PC-3 (cell line): ENCODE measurements at regions of chr3 and their contacts with region 1.

Region 1: GRCh38 chr3:71064288-71064955 is 519.1 kb downstream of the FOXP1 start:
- DNase-seq: peak; percentile 57
- ATAC-seq: peak; percentile 35
- H3K4me3 ChIP-seq: peak overlapping the region; percentile 71
- H3K27ac ChIP-seq: peak overlapping the region; percentile 76
- H3K4me1 ChIP-seq: peaks cover 62% of the 10 kb centered on the region
- H3K27me3 ChIP-seq: no peaks in the 10 kb centered on the region
- CTCF ChIP-seq: no peak

Region 2: DNA sequence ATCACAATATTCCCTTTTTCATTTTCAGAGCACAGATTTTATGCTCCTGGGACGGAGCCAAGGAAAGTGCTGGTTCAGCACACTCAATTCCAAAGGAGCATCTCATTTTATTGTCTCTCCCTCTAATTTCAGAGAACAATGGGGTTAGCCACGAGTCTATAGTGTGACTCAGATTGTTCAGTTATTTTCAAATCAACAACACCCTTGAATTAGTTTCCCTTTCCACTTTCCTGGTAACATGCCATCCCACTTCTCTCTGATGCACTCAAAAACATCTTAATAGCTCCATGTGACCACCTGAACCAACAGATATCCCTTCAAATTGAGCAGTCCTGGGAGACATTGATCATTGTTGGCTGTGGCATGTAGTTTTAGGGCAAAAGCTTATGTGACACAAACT is 362.3 kb before region 1 on chr3:
- CTCF ChIA-PET with region 1: no interaction called
- POLR2A ChIA-PET with region 1: no interaction called
- intact Hi-C with region 1: no loop called
- DNase-seq: no peak
- ATAC-seq: no peak
- H3K4me3 ChIP-seq: no peak overlapping the region
- H3K27ac ChIP-seq: no peak overlapping the region
- H3K4me1 ChIP-seq: no peaks in the 10 kb centered on the region
- H3K27me3 ChIP-seq: no peaks in the 10 kb centered on the region
- CTCF ChIP-seq: no peak

Region 3: DNA sequence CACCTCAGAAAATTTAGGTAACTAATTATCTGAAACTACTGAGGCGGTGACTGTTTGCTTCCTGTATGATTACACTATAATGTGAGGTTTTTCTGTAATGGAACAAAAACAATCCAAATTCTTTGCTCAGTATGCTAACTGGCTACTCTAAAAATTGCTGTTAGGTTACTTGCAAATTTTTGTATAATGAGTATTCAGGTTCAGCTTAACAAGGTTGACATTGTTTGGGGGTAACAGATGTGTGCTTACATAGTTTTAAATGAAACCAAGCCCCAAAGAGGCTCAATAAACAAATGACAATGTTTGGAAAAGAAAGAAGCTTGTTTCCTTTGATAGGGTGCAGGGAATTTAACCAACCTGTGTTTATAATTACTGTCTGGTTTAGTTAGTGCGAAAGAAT is 337.5 kb before region 1 on chr3:
- CTCF ChIA-PET with region 1: no interaction called
- POLR2A ChIA-PET with region 1: no interaction called
- intact Hi-C with region 1: loop called (anchors 5 kb)
- DNase-seq: peak; percentile 22
- ATAC-seq: peak; percentile 40; the same call in 1 of the 2 replicates
- H3K4me3 ChIP-seq: no peak overlapping the region
- H3K27ac ChIP-seq: no peak overlapping the region
- H3K4me1 ChIP-seq: peaks cover 15% of the 10 kb centered on the region; the same call in 1 of the 2 replicates
- H3K27me3 ChIP-seq: no peaks in the 10 kb centered on the region
- CTCF ChIP-seq: no peak

Region 4: GRCh38 chr3:71006810-71007785 is 57.3 kb before region 1 on chr3:
- CTCF ChIA-PET with region 1: interaction called, 3 read pairs
- POLR2A ChIA-PET with region 1: interaction called, 3 read pairs
- intact Hi-C with region 1: loop called (anchors 2 kb)
- DNase-seq: peak; percentile 69
- ATAC-seq: peak; percentile 60
- H3K4me3 ChIP-seq: no peak overlapping the region
- H3K27ac ChIP-seq: peak overlapping the region; percentile 35
- H3K4me1 ChIP-seq: peaks cover 23% of the 10 kb centered on the region
- H3K27me3 ChIP-seq: no peaks in the 10 kb centered on the region
- CTCF ChIP-seq: peak; percentile 82

Region 5: DNA sequence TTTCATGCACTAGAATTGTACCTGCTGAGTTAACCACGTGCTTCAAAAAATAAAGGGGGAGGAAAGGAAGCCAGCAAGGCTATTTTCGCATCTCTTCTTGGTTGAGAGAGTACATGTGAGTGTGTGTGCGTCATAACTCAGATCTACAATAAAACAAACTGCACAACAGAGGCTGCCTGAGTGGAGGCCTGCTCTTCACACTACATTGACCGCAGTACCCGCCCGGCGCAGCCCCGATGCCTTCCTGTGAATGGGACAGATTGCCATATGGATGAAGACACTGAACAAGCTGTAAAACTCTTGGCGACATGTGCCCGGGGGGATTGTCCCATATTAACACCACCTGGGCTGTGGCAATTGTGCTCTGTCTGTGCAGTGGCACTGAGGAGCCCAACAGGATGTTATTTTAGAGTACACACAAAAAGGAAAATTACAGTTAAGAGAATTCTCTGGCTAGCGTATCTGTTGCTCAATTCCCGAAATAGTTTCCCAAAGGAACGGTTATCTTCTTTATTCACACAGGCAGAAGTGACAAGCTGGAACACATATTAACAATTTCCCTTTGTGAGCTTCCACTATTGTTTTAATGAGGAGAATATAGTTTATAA is 32.4 kb before region 1 on chr3:
- CTCF ChIA-PET with region 1: interaction called, 3 read pairs
- POLR2A ChIA-PET with region 1: no interaction called
- intact Hi-C with region 1: loop called (anchors 1 kb)
- DNase-seq: no peak
- ATAC-seq: no peak
- H3K4me3 ChIP-seq: no peak overlapping the region
- H3K27ac ChIP-seq: peak overlapping the region; percentile 36; the same call in 1 of the 2 replicates
- H3K4me1 ChIP-seq: peaks cover 37% of the 10 kb centered on the region
- H3K27me3 ChIP-seq: no peaks in the 10 kb centered on the region
- CTCF ChIP-seq: no peak

Region 6: GRCh38 chr3:71130471-71131374 is 66.3 kb after region 1 on chr3:
- CTCF ChIA-PET with region 1: no interaction called
- POLR2A ChIA-PET with region 1: interaction called, 10 read pairs
- intact Hi-C with region 1: no loop called
- DNase-seq: peak; percentile 76
- ATAC-seq: peak; percentile 79
- H3K4me3 ChIP-seq: peak overlapping the region; percentile 71
- H3K27ac ChIP-seq: peak overlapping the region; percentile 8
- H3K4me1 ChIP-seq: peaks cover 32% of the 10 kb centered on the region
- H3K27me3 ChIP-seq: no peaks in the 10 kb centered on the region
- CTCF ChIP-seq: no peak

Region 7: GRCh38 chr3:71305231-71306206 is 241.1 kb after region 1 on chr3:
- CTCF ChIA-PET with region 1: no interaction called
- POLR2A ChIA-PET with region 1: no interaction called
- intact Hi-C with region 1: loop called (anchors 1 kb)
- DNase-seq: peak; percentile 38
- ATAC-seq: peak; percentile 65
- H3K4me3 ChIP-seq: peak overlapping the region; percentile 57
- H3K27ac ChIP-seq: no peak overlapping the region
- H3K4me1 ChIP-seq: peaks cover 24% of the 10 kb centered on the region
- H3K27me3 ChIP-seq: no peaks in the 10 kb centered on the region
- CTCF ChIP-seq: no peak